Aorta (tissue), 5 donors: ENCODE measurements at regions of chr21 and their contacts with region 1.

Region 1: GRCh38 chr21:46022551-46023525 is 41.3 kb downstream of the COL6A1 start:
- DNase-seq: peak; percentile 42 to 74
- ATAC-seq: peak; percentile 71
- H3K4me3 ChIP-seq: no peak overlapping the region
- H3K27ac ChIP-seq: no peak overlapping the region
- H3K4me1 ChIP-seq: no peaks in the 10 kb centered on the region
- H3K27me3 ChIP-seq: no peaks in the 10 kb centered on the region

Region 2: DNA sequence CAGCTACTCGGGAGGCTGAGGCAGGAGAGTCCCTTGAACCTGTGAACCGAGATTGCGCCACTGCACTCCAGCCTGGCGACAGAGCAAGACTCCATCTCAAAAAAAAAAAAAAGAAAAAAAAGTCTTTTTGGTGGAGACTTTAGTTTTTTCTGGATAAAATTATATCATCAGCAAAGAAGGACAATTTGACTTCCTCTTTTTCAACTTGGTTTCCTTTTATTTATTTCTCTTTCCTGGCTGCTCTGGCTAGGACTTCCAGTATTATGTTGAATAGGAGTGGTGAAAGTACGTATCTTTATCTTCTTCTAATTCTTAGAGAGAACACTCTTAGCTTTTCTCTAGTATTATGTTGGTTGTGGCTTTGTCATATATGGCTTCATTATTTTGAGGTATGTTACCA is 248.5 kb before region 1 on chr21:
- intact Hi-C with region 1: no loop called
- DNase-seq: no peak
- ATAC-seq: no peak
- H3K4me3 ChIP-seq: no peak overlapping the region
- H3K27ac ChIP-seq: no peak overlapping the region
- H3K4me1 ChIP-seq: no peaks in the 10 kb centered on the region
- H3K27me3 ChIP-seq: no peaks in the 10 kb centered on the region

Region 3: GRCh38 chr21:45989355-45990048 is 33.3 kb before region 1 on chr21:
- intact Hi-C with region 1: loop called in 1 of 2 experiments (anchors 5 kb)
- DNase-seq: peak; percentile 46 to 75
- ATAC-seq: no peak
- H3K4me3 ChIP-seq: no peak overlapping the region
- H3K27ac ChIP-seq: no peak overlapping the region
- H3K4me1 ChIP-seq: no peaks in the 10 kb centered on the region
- H3K27me3 ChIP-seq: no peaks in the 10 kb centered on the region